Breast epithelium (tissue), 4 donors: ENCODE measurements at regions of chr5 and their contacts with region 1.

Region 1: DNA sequence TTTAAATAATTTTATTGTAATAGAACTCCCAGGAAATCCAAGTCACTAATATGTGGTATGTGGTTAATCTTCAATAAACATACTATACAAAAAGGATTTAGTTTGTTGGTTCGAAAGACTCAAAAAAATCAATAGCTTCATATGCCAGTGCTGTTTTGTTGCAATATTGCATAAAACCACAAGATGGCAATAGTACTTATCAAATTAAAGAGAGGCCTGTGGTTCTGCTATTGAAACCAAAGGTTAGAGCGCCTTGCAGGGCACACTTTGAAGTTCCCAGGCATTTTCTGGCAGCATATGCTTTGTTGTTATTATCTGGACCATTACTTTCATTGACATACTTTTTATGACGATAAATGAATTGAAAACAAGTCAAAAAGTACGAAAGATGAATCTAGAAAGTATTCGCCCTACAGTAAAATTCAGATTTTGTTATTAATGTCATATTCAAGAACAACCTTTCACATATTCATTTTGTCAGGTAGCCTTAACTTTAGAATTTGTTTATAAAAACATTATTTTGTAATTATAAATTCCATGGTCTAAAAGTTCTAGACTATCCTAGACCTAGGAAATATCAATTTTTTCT is 316.3 kb downstream of the MCTP1 start:
- DNase-seq: no peak
- H3K4me3 ChIP-seq: no peak overlapping the region
- H3K27ac ChIP-seq: no peak overlapping the region
- H3K4me1 ChIP-seq: no peaks in the 10 kb centered on the region
- H3K27me3 ChIP-seq: no peaks in the 10 kb centered on the region
- CTCF ChIP-seq: peak; percentile 19 to 56 (median 52)
- POLR2A ChIP-seq: no peak

Region 2: GRCh38 chr5:94538260-94538659 is 430.3 kb before region 1 on chr5:
- intact Hi-C with region 1: loop called (anchors 5 kb)
- DNase-seq: no peak
- H3K4me3 ChIP-seq: no peak overlapping the region
- H3K27ac ChIP-seq: no peak overlapping the region
- H3K4me1 ChIP-seq: no peaks in the 10 kb centered on the region
- H3K27me3 ChIP-seq: no peaks in the 10 kb centered on the region
- CTCF ChIP-seq: no peak
- POLR2A ChIP-seq: no peak

Region 3: DNA sequence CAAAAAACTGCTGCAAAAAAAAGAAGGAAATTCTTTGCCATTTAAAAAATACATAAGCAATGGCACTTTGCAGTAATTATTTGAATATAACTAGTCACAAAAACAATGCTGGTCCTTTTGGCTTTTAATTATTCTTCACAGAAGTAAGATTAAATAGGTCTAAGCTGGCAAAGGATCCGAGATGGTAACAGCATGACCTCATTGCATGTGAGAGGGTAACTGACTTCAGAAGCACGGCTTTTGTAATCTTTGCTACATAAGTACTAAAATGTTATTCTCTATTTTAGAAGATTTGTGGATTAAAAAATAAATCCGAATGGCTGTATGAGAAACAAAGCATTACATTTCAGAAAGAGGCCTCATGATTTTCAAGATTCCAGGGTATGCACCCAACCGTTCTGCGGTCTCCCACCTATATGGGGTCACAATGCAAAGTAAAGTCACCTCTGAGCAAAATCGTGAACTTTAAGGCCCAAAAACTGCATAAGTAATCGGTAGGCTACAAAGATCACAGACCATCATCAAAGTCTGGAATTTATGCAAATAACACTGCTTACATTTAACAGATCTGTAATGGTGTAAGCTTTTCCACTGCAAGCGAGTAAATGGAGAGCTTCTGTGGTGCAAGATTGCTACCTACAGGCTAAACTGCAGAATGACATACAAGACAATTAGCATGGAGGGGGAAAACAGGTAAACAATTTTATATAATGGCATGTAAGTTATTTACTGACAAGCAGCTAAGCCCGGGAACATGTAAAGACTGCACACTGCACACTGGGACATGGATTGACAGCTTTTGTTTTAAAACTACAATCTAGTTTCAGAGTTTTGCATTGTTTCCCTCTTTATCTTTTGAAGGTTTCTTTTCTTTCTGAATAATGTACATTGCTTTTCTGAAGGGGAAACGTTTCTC is 118.5 kb before region 1 on chr5:
- intact Hi-C with region 1: no loop called
- DNase-seq: no peak
- H3K4me3 ChIP-seq: no peak overlapping the region
- H3K27ac ChIP-seq: no peak overlapping the region
- H3K4me1 ChIP-seq: no peaks in the 10 kb centered on the region
- H3K27me3 ChIP-seq: no peaks in the 10 kb centered on the region
- CTCF ChIP-seq: peak in 1 of 3 donors; percentile 39
- POLR2A ChIP-seq: no peak

Region 4: GRCh38 chr5:94920570-94920969 is 48.0 kb before region 1 on chr5:
- intact Hi-C with region 1: no loop called
- DNase-seq: no peak
- H3K4me3 ChIP-seq: no peak overlapping the region
- H3K27ac ChIP-seq: no peak overlapping the region
- H3K4me1 ChIP-seq: no peaks in the 10 kb centered on the region
- H3K27me3 ChIP-seq: no peaks in the 10 kb centered on the region
- CTCF ChIP-seq: no peak
- POLR2A ChIP-seq: no peak

Region 5: GRCh38 chr5:95382801-95383200 is 414.2 kb after region 1 on chr5:
- intact Hi-C with region 1: no loop called
- DNase-seq: no peak
- H3K4me3 ChIP-seq: no peak overlapping the region
- H3K27ac ChIP-seq: no peak overlapping the region
- H3K4me1 ChIP-seq: no peaks in the 10 kb centered on the region
- H3K27me3 ChIP-seq: no peaks in the 10 kb centered on the region
- CTCF ChIP-seq: no peak
- POLR2A ChIP-seq: no peak